H1 (cell line): ENCODE measurements at regions of chr11 and their contacts with region 1.

Region 1: GRCh38 chr11:60334005-60334620 is 7.1 kb downstream of the MS4A6E start:
- DNase-seq: peak; percentile 50 to 94
- H3K4me3 ChIP-seq: no peak overlapping the region
- H3K27ac ChIP-seq: no peak overlapping the region
- H3K4me1 ChIP-seq: no peaks in the 10 kb centered on the region; a peak in 2 of 7 replicates
- H3K27me3 ChIP-seq: no peaks in the 10 kb centered on the region
- CTCF ChIP-seq: peak; percentile 27 to 75 (median 72)
- EP300 ChIP-seq: no peak
- POLR2A ChIP-seq: no peak
- RAD21 ChIP-seq: peak; percentile 48 to 65; a peak in 3 of 4 replicates

Region 2: GRCh38 chr11:60169264-60169915 is 164.7 kb before region 1 on chr11:
- CTCF ChIA-PET with region 1: no interaction called
- POLR2A ChIA-PET with region 1: no interaction called
- DNase-seq: peak in 1 of 2 experiments; percentile 49
- H3K4me3 ChIP-seq: no peak overlapping the region
- H3K27ac ChIP-seq: no peak overlapping the region
- H3K4me1 ChIP-seq: no peaks in the 10 kb centered on the region
- H3K27me3 ChIP-seq: no peaks in the 10 kb centered on the region
- CTCF ChIP-seq: peak in 1 of 3 experiments; percentile 26; a peak in 1 of 4 replicates
- EP300 ChIP-seq: no peak
- POLR2A ChIP-seq: no peak
- RAD21 ChIP-seq: peak; percentile 31 to 32

Region 3: DNA sequence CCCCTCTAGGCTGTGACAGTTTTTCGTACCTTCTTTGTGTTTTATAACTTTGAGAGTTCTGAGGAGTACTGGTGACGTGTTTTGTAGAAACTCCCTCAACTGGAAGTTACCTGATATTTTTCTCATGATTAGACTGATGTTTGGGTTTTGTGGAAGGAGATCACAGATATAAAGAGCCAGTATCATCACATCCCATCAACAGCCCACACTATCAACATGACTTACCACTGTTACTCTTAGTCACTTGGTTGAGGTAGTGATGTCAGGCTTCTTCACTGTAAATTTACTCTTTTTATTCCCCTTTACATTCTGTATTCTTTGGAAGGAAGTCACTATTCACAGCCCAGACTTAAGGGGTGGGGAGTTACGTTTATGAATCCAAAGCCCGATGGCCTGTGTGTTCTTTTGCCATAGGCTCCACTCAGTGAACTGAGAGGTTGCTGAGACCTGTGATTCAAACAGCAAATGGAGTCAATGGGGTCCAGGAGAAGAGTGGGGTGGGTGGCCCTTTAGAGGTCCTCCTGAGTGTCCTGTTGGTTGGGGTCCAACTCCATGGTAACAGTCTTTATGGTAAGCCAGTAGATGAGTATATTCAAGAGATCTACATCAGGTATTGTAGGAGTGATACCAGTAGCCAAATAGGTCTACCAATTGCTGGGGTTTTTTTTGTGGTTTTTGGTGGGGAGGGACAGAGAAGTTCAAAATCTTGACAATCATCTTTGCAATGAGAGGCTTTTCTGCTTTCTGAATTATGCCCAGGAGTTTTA is 76.0 kb before region 1 on chr11:
- CTCF ChIA-PET with region 1: no interaction called
- POLR2A ChIA-PET with region 1: no interaction called
- DNase-seq: no peak
- H3K4me3 ChIP-seq: no peak overlapping the region
- H3K27ac ChIP-seq: no peak overlapping the region
- H3K4me1 ChIP-seq: peaks cover 0 to 3% (median 0%) of the 10 kb centered on the region in 4 experiments; a peak in 1 of 7 replicates
- H3K27me3 ChIP-seq: no peaks in the 10 kb centered on the region
- CTCF ChIP-seq: no peak
- EP300 ChIP-seq: no peak
- POLR2A ChIP-seq: no peak
- RAD21 ChIP-seq: no peak

Region 4: GRCh38 chr11:60305906-60306619 is 28.1 kb before region 1 on chr11:
- CTCF ChIA-PET with region 1: interaction called, 14 read pairs
- POLR2A ChIA-PET with region 1: no interaction called
- DNase-seq: no peak
- H3K4me3 ChIP-seq: no peak overlapping the region
- H3K27ac ChIP-seq: no peak overlapping the region
- H3K4me1 ChIP-seq: no peaks in the 10 kb centered on the region
- H3K27me3 ChIP-seq: no peaks in the 10 kb centered on the region
- CTCF ChIP-seq: no peak
- EP300 ChIP-seq: no peak
- POLR2A ChIP-seq: no peak
- RAD21 ChIP-seq: no peak

Region 5: DNA sequence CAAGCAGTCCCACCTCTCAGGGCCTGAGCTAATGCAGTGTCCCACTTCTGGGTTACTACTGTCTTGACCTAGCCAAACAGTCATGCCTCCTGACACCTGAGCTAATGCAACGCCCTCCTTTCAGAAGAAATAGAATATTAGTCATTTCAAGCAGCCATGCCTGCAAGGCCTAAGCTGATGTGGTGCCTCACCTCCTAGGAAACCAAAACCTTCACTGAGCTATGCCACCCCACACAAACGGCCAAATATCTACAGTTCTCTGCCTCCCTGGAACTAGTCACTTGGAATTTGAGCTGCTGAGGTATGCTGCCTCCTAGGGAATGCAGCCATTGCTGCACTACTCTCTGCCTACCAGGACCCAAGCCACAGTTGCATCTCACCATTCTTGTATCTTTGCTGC is 15.4 kb before region 1 on chr11:
- CTCF ChIA-PET with region 1: interaction called, 51 read pairs
- POLR2A ChIA-PET with region 1: no interaction called
- DNase-seq: no peak
- H3K4me3 ChIP-seq: no peak overlapping the region
- H3K27ac ChIP-seq: no peak overlapping the region
- H3K4me1 ChIP-seq: no peaks in the 10 kb centered on the region
- H3K27me3 ChIP-seq: no peaks in the 10 kb centered on the region
- CTCF ChIP-seq: peak in 2 of 3 experiments; percentile 3 to 33; a peak in 1 of 4 replicates
- EP300 ChIP-seq: no peak
- POLR2A ChIP-seq: no peak
- RAD21 ChIP-seq: no peak; a peak in 1 of 4 replicates

Region 6: DNA sequence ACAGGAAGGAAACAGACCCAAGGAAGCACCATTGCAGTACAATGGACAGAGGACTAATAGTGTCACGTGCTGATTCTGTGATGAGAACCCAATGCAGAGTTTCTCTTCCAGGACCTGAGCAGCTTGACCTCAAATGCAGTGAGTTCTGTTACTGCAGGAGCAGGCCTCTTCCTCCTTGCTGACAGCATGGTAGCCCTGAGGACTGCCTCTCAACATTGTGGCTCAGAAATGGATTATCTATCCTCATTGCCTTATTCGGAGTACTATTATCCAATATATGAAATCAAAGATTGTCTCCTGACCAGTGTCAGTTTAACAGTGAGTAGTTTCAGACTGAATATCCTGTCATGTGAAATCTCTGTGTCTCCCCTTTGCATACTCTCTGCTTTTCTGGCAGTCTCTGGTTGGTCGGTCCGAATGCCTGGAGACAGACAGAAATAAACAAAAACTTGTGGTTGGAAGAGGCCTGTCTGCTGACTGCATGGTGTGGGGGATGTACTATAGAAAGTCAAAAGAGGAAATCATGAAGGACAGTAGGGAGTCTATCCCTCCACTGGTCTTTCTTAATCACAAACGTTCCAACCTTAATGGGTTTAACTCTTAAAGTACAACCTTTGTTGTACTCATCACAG is 55.3 kb after region 1 on chr11:
- CTCF ChIA-PET with region 1: no interaction called
- POLR2A ChIA-PET with region 1: no interaction called
- DNase-seq: no peak
- H3K4me3 ChIP-seq: no peak overlapping the region
- H3K27ac ChIP-seq: no peak overlapping the region
- H3K4me1 ChIP-seq: no peaks in the 10 kb centered on the region
- H3K27me3 ChIP-seq: no peaks in the 10 kb centered on the region
- CTCF ChIP-seq: no peak
- EP300 ChIP-seq: no peak
- POLR2A ChIP-seq: no peak
- RAD21 ChIP-seq: no peak